Heart left ventricle (tissue), 16 donors: ENCODE measurements at regions of chr18 and their contacts with region 1.

Region 1: DNA sequence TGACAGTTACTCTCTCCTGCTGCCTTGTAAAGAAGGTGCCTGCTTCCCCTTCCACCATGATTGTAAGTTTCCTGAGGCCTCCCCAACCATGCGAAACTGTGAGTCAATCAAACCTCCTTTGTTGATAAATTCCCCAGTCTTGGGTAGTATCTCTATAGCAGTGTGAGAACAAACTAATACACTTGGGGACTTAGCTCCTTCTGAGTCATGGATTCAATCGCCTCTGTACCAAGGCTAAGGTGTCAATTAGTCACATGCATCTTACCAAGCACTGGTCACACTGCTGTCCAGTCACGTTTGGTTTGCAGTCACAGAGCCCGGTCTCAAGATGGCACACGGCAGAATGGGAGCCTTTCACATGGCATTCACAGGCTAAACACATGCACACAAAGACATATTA is 100.6 kb downstream of the LAMA1 start:
- DNase-seq: no peak
- ATAC-seq: no peak
- H3K4me3 ChIP-seq: no peak overlapping the region
- H3K27ac ChIP-seq: no peak overlapping the region
- H3K4me1 ChIP-seq: no peaks in the 10 kb centered on the region
- H3K27me3 ChIP-seq: no peaks in the 10 kb centered on the region
- CTCF ChIP-seq: no peak
- POLR2A ChIP-seq: no peak

Region 2: GRCh38 chr18:6949800-6950586 is 67.0 kb before region 1 on chr18:
- intact Hi-C with region 1: loop called in 1 of 10 experiments (anchors 10 kb)
- DNase-seq: no peak
- ATAC-seq: no peak
- H3K4me3 ChIP-seq: no peak overlapping the region
- H3K27ac ChIP-seq: no peak overlapping the region
- H3K4me1 ChIP-seq: no peaks in the 10 kb centered on the region
- H3K27me3 ChIP-seq: peaks cover 0 to 6% (median 0%) of the 10 kb centered on the region in 9 donors
- CTCF ChIP-seq: no peak
- POLR2A ChIP-seq: no peak